Cardiac septum (tissue), 1 donor: ENCODE measurements at regions of chr10 and their contacts with region 1.

Region 1: DNA sequence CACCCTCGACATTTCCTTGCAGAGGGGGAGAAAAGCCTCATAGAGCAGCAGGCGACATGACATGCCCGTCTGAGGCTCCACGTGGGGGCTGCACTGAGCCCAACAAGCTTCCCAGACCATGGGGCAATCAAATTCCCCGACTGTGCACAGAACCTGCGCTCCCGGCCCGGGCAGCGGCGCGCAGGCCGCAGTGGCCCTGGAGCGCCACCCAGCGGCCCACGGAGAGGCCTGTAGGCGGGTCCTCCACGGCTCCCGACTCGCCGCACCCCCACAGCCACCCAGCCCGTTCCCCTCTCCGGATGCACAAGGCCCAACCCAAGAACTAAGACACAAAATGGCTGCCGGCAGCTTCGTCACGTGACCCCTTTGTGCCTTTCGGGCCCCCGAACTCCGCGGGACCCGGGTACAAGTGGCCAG is 816 bp downstream of the EPC1 start:
- DNase-seq: peak; percentile 98

Region 2: DNA sequence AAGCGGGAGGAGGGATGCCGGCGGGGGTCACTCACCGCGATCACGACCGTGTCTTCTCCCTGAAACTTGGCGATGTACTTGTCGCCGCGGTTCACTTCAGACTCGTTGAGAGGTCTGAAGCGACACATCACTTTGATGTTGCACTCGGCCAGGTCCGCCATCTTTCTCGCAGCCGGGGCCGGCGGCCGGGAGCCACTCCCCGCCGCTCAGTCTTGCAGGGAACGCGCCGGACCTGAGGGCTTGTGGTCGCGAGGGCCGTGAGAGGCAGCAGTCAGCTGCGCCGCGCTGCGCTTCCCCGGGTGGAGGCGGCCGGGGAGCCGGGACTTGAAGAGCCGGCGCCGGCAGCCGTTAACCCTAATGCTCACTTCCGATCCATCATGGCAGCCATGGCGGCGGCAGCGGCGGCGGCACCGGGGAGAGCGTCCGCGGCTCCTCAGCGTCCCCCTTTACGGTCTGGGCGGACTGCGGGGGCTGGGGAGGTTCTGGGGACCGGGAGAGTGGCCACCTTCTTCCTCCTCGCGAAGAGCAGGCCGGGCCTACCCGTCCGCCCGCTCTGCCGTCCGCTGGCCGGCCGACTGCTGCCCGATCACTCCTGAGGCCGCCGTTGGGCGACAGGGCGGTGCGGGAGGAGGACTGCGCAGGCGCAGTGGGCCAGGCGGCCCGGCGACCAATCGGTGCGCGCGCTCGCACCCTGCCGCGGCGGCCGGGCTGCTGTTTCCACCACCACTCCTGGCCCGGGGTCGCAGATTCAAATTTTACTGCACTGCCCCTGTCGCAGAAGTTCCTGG is 290.1 kb before region 1 on chr10 and contains the start of gene KIF5B:
- intact Hi-C with region 1: loop called (anchors 5 kb)
- DNase-seq: peak; percentile 95
- total RNA-seq, gene KIF5B: 181 TPM

Region 3: DNA sequence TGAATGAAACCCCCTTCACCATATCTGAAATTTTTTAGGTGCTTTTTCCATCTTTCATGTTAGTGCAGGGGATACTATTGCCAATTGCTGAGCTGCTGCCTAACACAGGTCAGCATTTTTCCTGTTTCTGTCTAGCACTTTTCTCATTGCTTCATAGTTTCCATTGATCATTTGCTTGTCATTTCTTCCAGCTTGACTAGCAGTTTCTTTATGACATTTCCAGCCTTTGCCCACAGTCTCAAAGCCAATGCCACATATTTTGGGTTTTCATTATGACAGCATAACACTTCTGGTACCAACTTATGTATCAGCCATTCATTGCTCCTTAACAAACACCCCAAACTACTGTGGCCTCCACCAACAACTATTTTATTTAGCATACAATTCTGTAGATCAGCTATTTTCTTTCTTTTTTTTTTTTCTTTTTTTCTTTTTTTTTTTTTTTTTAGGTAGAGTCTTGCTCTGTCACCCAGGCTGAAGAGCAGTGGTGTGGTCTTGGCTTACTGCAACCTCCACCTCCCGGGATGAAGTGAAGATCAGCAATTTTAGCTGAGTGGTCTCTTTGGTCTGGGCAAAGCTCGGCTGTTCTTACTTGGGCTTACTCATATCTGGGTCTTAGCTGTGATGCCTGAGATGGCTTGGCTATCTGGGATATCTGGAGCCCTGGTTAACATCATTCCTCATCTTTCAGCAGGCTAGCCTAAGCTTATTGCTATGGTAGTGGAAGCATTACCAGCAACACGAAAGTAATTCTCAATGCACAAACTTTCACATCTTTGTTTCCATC is 101.5 kb before region 1 on chr10:
- intact Hi-C with region 1: no loop called
- DNase-seq: no peak

Region 4: GRCh38 chr10:32256613-32257437 is 89.3 kb before region 1 on chr10:
- intact Hi-C with region 1: loop called (anchors 1 kb)
- DNase-seq: peak; percentile 85